ENCODE measurements at regions of chr1 and their contacts with region 1.

Region 1: GRCh38 chr1:78004719-78005447 is at the start of gene DNAJB4:
- H3K4me3 ChIP-seq: peak within 1 kb of the TSS; percentile 55
- H3K27ac ChIP-seq: peak within 1 kb of the TSS; percentile 92
- H3K4me1 ChIP-seq: peaks cover 14% of the 10 kb centered on the region
- CTCF ChIP-seq: no peak

Region 2: GRCh38 chr1:77683160-77684148 is 321.4 kb before region 1 on chr1:
- CTCF ChIA-PET with region 1: no interaction called
- POLR2A ChIA-PET with region 1: interaction called, 10 read pairs
- H3K4me3 ChIP-seq: peak overlapping the region; percentile 83
- H3K27ac ChIP-seq: peak overlapping the region; percentile 95
- H3K4me1 ChIP-seq: peaks cover 9% of the 10 kb centered on the region; the same call in 1 of the 2 replicates
- CTCF ChIP-seq: no peak; the same call in 1 of the 2 replicates

Region 3: GRCh38 chr1:77857552-77857951 is 147.3 kb before region 1 on chr1:
- CTCF ChIA-PET with region 1: no interaction called
- POLR2A ChIA-PET with region 1: no interaction called
- H3K4me3 ChIP-seq: no peak overlapping the region
- H3K27ac ChIP-seq: no peak overlapping the region
- H3K4me1 ChIP-seq: no peaks in the 10 kb centered on the region
- CTCF ChIP-seq: no peak

Region 4: GRCh38 chr1:77978969-77979876 is 25.7 kb before region 1 on chr1 and contains the start of gene FUBP1:
- CTCF ChIA-PET with region 1: interaction called, 14 read pairs
- POLR2A ChIA-PET with region 1: interaction called, 137 read pairs
- H3K4me3 ChIP-seq: peak within 1 kb of the TSS; percentile 96
- H3K27ac ChIP-seq: peak within 1 kb of the TSS; percentile 77
- H3K4me1 ChIP-seq: peaks cover 6% of the 10 kb centered on the region; the same call in 1 of the 2 replicates
- CTCF ChIP-seq: peak; percentile 93

Region 5: GRCh38 chr1:77994117-77994705 is 10.7 kb before region 1 on chr1:
- CTCF ChIA-PET with region 1: no interaction called
- POLR2A ChIA-PET with region 1: interaction called, 21 read pairs
- H3K4me3 ChIP-seq: no peak overlapping the region
- H3K27ac ChIP-seq: no peak overlapping the region
- H3K4me1 ChIP-seq: no peaks in the 10 kb centered on the region
- CTCF ChIP-seq: no peak

Region 6: DNA sequence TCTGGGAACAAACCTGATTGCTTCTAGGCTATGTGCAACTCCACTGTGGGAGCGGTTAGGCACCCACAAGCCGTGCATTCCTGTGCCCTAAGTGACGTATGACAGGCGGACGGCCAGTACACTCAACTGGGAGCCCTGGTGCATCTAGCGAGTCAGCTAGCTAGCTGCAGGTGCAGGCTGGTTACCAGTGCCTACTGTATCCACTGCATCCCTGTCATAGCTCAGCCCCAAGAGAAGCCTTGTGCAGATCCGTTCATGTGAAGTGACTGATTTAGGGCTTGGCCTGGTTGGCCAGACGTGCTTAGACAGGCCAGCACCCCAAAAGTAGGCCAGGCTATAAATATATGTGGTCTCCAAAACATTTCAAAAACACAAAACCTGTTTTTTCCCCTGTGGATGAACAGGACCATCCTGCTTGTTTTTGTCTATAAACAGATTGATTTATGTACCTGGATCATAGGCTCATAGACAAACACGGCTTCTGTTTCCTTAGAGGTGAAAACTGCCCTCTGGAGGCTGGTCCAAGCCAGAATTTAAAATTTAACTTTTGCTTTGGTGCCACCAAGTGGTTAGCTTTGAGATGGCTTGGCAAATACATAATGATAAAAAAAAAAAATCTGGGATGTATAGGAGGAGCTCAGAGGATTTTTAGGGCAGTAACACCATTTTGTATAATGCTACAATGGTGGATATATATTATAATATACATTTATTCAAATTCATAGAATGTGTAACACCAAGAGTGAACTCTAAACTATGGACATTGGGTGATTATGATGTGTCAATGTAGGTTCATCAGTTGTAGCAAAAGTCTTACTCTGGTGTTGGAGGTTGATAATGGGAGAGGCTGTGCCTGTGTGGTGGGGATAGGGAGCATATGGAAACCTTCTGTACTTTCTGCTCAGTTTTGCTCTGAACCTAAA is 109.4 kb after region 1 on chr1:
- CTCF ChIA-PET with region 1: interaction called, 42 read pairs
- POLR2A ChIA-PET with region 1: interaction called, 20 read pairs
- H3K4me3 ChIP-seq: no peak overlapping the region
- H3K27ac ChIP-seq: no peak overlapping the region
- H3K4me1 ChIP-seq: no peaks in the 10 kb centered on the region
- CTCF ChIP-seq: peak; percentile 85

Region 7: DNA sequence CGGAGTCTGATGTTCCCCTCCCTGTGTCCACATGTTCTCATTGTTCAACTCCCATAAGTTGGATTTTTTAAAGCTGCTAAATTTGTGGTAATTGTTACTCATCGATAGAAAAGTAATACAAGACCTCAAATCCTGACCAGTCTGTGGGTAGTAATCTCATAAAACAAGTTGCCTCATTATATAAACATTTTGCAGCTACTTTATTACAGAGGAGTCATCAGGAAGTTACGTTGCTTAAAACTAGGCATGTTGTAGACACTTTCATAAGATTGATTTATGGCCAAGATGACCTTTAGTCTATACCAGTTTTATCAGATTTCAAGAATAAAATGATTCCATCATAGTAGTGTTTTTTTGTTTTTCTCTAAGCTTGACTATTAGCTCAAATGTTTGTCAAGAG is 249.6 kb after region 1 on chr1:
- CTCF ChIA-PET with region 1: no interaction called
- POLR2A ChIA-PET with region 1: no interaction called
- H3K4me3 ChIP-seq: no peak overlapping the region
- H3K27ac ChIP-seq: no peak overlapping the region
- H3K4me1 ChIP-seq: no peaks in the 10 kb centered on the region
- CTCF ChIP-seq: no peak

Measured in HEK293 (cell line).